BJ (cell line): ENCODE measurements at regions of chr11 and their contacts with region 1.

Region 1: DNA sequence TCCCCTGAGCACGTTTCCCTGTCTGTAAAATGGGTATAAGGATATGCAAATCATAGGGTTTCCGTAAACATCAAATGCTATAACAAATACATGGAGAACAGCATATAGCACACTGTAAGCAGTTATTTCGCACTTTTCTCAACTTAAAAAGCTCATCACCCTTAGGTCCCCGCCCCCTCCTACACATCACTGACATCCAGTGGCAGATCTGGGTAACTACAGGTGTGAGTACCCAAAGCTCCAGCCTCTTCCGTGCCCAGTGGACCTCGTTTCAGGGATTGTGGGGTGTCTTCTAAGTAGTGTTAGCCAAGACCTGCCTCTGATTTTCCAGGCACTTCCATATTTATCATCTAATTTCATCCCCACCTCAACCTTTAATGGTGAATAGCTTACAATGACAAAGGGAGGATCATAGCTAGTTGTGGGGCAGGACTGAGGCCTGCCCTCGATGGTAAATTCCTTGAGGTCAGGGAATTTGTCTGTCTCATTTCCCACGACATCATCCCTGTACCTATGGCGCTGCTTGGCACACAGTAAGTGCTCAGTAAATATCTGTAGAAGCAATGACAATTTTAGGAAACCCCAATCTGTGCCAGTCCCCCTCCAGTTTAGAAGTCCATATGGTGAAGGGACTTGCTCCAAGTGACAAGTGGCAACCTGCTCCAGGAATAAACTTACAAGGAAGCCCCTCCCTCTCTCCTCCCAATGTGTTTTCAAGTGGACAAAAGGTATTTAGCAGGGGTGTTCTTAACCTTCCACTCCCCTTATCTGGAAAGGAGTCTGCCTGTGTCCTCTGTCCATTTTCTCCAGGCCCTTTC is 340.5 kb downstream of the TENM4 start:
- DNase-seq: no peak
- H3K4me3 ChIP-seq: no peak overlapping the region
- H3K27me3 ChIP-seq: no peaks in the 10 kb centered on the region
- CTCF ChIP-seq: peak; percentile 89

Region 2: GRCh38 chr11:78798660-78799059 is 301.6 kb before region 1 on chr11:
- CTCF ChIA-PET with region 1: interaction called, 13 read pairs
- POLR2A ChIA-PET with region 1: no interaction called
- DNase-seq: no peak
- H3K4me3 ChIP-seq: no peak overlapping the region
- H3K27me3 ChIP-seq: no peaks in the 10 kb centered on the region
- CTCF ChIP-seq: peak; percentile 88

Region 3: GRCh38 chr11:78832226-78832947 is 267.9 kb before region 1 on chr11:
- CTCF ChIA-PET with region 1: no interaction called
- POLR2A ChIA-PET with region 1: no interaction called
- DNase-seq: no peak
- H3K4me3 ChIP-seq: no peak overlapping the region
- H3K27me3 ChIP-seq: no peaks in the 10 kb centered on the region
- CTCF ChIP-seq: no peak

Region 4: GRCh38 chr11:79052544-79052943 is 47.8 kb before region 1 on chr11:
- CTCF ChIA-PET with region 1: interaction called, 11 read pairs
- POLR2A ChIA-PET with region 1: no interaction called
- DNase-seq: no peak
- H3K4me3 ChIP-seq: no peak overlapping the region
- H3K27me3 ChIP-seq: 0 out of 2 replicates have a peak, but pooled peaks cover 2% of the 10 kb centered on the region
- CTCF ChIP-seq: 0 out of 2 replicates have a peak, but pooled peaks have one; percentile 28

Region 5: DNA sequence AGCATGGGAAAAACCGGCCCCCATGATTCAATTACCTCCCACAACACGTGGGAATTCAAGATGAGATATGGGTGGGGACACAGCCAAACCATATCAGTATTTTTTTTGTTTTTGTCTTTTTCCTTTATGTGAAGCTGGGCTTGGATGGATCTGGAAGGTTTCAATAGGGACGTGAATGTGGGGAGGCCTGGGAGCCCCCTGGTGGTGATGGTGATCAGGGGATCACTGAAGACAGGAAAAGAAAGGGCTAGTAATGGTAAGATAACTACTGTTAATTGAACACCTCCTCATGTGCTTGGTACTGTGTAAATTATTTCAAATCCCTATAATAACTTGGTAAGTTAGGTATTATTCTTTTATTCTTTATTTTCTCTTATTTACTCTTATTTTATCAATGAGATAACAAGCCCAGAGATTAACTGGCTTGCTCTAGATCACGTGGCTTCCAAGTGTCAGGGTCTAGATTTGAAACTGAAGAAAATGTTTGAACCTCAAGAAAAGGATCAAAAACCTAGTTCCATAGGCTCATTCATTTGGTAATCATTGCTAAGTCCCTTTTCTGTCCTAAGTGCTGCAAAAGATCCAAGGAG is 23.7 kb before region 1 on chr11:
- CTCF ChIA-PET with region 1: interaction called, 12 read pairs
- POLR2A ChIA-PET with region 1: no interaction called
- DNase-seq: no peak
- H3K4me3 ChIP-seq: no peak overlapping the region
- H3K27me3 ChIP-seq: no peaks in the 10 kb centered on the region
- CTCF ChIP-seq: peak; percentile 79

Region 6: GRCh38 chr11:79087238-79087960 is 12.9 kb before region 1 on chr11:
- CTCF ChIA-PET with region 1: interaction called, 17 read pairs
- POLR2A ChIA-PET with region 1: interaction called, 3 read pairs
- DNase-seq: peak; percentile 34
- H3K4me3 ChIP-seq: no peak overlapping the region
- H3K27me3 ChIP-seq: no peaks in the 10 kb centered on the region
- CTCF ChIP-seq: no peak